ENCODE measurements at regions of chr13 and their contacts with region 1.

Region 1: GRCh38 chr13:45109102-45109720 is 11.1 kb upstream of the GTF2F2 start:
- DNase-seq: no peak
- ATAC-seq: no peak
- H3K4me3 Mint-ChIP-seq: peak overlapping the region; percentile 17
- H3K27ac Mint-ChIP-seq: no peak overlapping the region
- H3K4me1 Mint-ChIP-seq: peaks cover 2% of the 10 kb centered on the region
- H3K27me3 Mint-ChIP-seq: peaks cover 9% of the 10 kb centered on the region
- CTCF ChIP-seq: no peak

Region 2: DNA sequence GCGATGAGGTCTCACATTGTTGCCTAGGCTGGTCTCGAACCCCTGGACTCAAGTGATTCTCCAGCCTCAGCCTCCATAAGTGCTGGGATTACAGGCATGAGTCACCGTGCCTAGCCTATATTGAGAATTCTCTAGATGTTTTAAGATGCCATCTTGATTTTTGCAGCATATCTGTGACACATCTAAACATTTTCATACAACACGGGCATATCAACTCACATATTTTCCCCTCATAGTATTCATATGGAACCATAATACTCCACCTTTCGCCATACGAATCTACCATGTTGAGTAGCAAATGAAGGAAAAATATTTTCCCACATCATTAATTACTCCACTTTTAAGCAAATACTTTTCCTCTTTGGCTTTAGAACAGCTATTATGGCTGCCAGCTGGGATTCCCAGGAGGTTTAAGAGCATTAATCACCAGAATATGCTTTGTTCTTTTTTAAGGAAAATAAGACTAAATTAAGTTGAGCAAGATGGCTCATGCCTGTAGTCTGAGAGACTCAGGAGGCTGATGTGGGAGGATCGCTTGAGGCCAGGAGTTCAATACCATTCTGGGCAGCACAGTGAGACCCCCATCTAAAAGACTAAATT is 45.9 kb before region 1 on chr13:
- CTCF ChIA-PET with region 1: no interaction called
- POLR2A ChIA-PET with region 1: interaction called, 13 read pairs
- intact Hi-C with region 1: no loop called
- DNase-seq: no peak
- ATAC-seq: no peak
- H3K4me3 Mint-ChIP-seq: no peak overlapping the region
- H3K27ac Mint-ChIP-seq: no peak overlapping the region
- H3K4me1 Mint-ChIP-seq: peaks cover 3% of the 10 kb centered on the region
- H3K27me3 Mint-ChIP-seq: no peaks in the 10 kb centered on the region
- CTCF ChIP-seq: no peak

Region 3: DNA sequence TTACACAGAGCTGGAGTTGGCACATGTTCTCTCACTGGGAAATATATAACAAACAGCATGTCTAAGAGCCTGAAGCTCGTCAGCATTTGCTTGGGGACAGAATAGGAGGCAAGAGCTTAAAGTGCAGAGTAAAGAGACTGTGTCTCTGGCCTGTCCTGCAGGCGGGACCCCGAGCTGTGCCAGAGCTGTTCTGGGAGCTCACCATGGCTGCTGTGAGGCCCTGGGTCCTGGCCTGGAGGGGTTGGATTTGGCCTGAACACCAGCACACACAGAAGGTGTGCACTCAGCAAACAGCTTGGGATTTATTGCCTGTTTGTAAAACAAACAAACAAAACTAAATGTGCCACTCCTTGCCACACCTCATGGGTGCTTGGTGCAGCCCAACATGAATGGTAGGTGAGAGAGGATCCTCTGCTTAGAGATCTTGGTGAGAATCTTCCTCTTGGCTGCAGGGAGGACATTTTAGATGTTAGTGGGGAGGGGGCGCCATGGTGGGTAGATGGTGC is 445.4 kb after region 1 on chr13:
- CTCF ChIA-PET with region 1: no interaction called
- POLR2A ChIA-PET with region 1: no interaction called
- intact Hi-C with region 1: no loop called
- DNase-seq: no peak
- ATAC-seq: no peak
- H3K4me3 Mint-ChIP-seq: no peak overlapping the region
- H3K27ac Mint-ChIP-seq: no peak overlapping the region
- H3K4me1 Mint-ChIP-seq: no peaks in the 10 kb centered on the region
- H3K27me3 Mint-ChIP-seq: peaks cover 13% of the 10 kb centered on the region
- CTCF ChIP-seq: no peak